Psoas muscle (tissue), 8 donors: ENCODE measurements at regions of chr9 and their contacts with region 1.

Region 1: GRCh38 chr9:37422289-37423104 is at the start of gene GRHPR:
- DNase-seq: peak; percentile 93 to 97
- ATAC-seq: peak; percentile 99
- H3K4me3 ChIP-seq: peak within 1 kb of the TSS; percentile 83
- H3K27ac ChIP-seq: peak within 1 kb of the TSS; percentile 93
- H3K4me1 ChIP-seq: peaks cover 17% of the 10 kb centered on the region
- H3K27me3 ChIP-seq: no peaks in the 10 kb centered on the region
- CTCF ChIP-seq: no peak
- total RNA-seq, gene GRHPR: 74.7 to 111 (median 100) TPM

Region 2: DNA sequence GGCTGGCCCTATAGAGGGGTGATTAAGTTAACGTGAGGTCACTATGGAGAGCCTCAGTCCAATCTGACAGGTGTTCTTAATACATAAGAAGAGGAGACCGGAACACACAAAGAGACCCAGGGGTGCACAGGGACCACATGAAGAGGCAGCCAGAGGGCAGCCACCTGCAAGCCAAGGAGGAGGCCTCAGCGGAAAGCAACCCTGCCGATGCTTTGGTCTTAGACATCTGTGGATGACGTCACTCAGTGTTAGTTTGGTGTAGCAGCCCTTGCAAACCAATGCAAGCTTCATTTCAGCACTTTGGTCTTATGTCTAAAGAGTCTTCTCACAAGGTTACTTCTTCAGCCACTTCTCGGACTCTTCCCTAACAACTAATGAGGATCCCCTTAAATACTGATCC is 47.6 kb before region 1 on chr9:
- intact Hi-C with region 1: loop called in 1 of 2 experiments (anchors 5 kb)
- DNase-seq: no peak
- ATAC-seq: no peak
- H3K4me3 ChIP-seq: no peak overlapping the region
- H3K27ac ChIP-seq: no peak overlapping the region
- H3K4me1 ChIP-seq: no peaks in the 10 kb centered on the region
- H3K27me3 ChIP-seq: peaks cover 0 to 2% (median 0%) of the 10 kb centered on the region in 3 donors
- CTCF ChIP-seq: no peak

Region 3: DNA sequence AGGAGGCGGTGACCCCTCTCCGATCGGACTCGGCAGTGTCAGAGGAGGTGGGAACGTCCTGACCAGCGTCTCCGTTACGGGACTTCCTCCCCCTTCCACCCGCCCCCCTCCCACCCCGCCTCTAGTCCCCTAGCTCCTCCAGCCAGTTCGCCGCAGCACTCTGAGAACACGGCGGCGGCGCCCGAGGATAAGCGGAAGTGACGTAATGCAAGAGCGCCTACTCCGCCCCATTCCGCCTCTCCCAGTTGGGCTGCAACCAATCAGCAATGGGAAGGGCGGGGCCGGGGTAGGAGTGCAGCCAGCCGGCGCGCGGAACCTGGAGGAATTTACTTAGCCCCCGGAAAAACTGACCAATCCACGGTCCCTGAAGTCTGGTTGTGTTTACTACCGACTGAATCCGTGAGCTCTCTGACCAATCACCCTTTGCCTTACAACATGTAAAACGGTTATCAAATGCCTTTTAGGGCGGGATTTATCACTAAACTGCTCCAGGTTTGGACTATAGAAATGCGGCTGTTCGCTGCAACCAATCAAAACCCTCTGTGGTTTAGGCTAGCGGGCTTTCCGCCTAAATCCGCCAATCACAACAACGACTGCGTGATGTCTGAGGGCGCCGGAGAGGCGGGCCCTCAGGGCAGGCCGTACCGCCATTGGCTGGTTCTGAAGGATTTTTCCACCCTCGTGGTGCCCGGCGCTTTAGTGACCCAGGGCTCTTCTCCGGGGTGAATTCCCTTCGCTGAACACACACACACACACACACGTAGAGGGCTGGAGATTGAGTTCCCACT is 42.9 kb after region 1 on chr9 and contains the start of gene ZBTB5:
- intact Hi-C with region 1: loop called (anchors 5 kb)
- DNase-seq: peak; percentile 99
- ATAC-seq: peak; percentile 89 to 92 (median 90)
- H3K4me3 ChIP-seq: peak within 1 kb of the TSS; percentile 96
- H3K27ac ChIP-seq: peak within 1 kb of the TSS; percentile 99
- H3K4me1 ChIP-seq: peaks cover 19% of the 10 kb centered on the region
- H3K27me3 ChIP-seq: no peaks in the 10 kb centered on the region
- CTCF ChIP-seq: no peak
- total RNA-seq, gene ZBTB5: 5.2 to 6.0 (median 5.3) TPM

Region 4: DNA sequence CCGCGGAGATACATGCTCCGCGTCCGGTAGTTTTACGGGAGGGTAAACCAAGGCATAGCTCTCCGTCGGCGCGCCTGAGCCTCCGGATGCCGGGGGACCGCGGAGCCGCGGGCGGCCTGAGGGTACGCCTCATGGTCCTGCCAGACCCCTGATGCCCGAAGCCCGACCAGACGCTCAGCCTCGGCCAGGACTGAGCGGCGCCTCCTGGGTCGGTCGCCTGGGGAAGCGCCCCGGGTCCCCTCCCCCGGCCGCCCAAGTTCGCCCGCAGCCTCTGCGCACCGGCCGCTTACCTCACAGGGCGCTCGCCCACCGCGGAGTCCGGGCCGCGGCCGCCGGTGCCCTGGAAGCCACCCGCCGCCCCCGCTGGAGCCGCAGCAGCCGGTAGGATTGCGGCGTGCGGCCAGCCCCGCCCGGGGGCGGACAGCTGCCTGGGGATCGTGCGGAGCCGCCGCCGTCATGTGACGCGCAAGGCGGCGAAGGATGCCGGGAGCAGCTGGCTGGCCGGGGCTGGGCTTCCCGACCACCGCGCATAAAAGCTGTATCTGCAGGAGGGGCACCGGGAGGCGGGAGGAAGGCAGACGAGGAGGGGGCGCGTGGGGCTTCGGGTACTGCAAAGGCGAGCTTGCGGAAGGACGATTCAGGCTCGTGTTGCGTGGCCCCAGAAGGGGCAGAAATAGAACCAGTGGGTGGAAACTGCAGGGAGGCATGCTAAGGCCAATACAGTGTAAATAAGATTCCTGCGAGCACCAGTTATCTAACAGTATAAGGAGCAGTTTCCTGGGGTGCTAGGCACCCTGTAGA is 153.6 kb after region 1 on chr9 and contains the start of gene FBXO10:
- intact Hi-C with region 1: loop called in 1 of 2 experiments (anchors 10 kb)
- DNase-seq: peak; percentile 85 to 87
- ATAC-seq: peak; percentile 89
- H3K4me3 ChIP-seq: peak within 1 kb of the TSS; percentile 90
- H3K27ac ChIP-seq: peak within 1 kb of the TSS; percentile 98
- H3K4me1 ChIP-seq: peaks cover 39% of the 10 kb centered on the region
- H3K27me3 ChIP-seq: no peaks in the 10 kb centered on the region
- CTCF ChIP-seq: no peak
- total RNA-seq, gene FBXO10: 31.3 to 90.4 (median 43.0) TPM

Region 5: GRCh38 chr9:38405785-38406184 is 983.3 kb after region 1 on chr9:
- intact Hi-C with region 1: no loop called
- DNase-seq: no peak
- ATAC-seq: no peak
- H3K4me3 ChIP-seq: no peak overlapping the region
- H3K27ac ChIP-seq: no peak overlapping the region
- H3K4me1 ChIP-seq: no peaks in the 10 kb centered on the region
- H3K27me3 ChIP-seq: peaks cover 0 to 13% (median 0%) of the 10 kb centered on the region in 3 donors
- CTCF ChIP-seq: no peak